Activated CD8-positive, alpha-beta T cell treated with anti-CD3 and anti-CD28 coated beads, Interleukin-2, amount 10 ng/mL, durations not matched to agents 7 days and 5 days (primary cell): ENCODE measurements at regions of chr15 and their contacts with region 1.

Region 1: GRCh38 chr15:51776952-51777574 is 25.7 kb downstream of the TMOD2 start:
- DNase-seq: peak; percentile 80
- ATAC-seq: peak; percentile 73
- H3K4me3 Mint-ChIP-seq: no peak overlapping the region
- H3K27ac Mint-ChIP-seq: no peak overlapping the region
- H3K4me1 Mint-ChIP-seq: peaks cover 9% of the 10 kb centered on the region
- H3K27me3 Mint-ChIP-seq: no peaks in the 10 kb centered on the region

Region 2: DNA sequence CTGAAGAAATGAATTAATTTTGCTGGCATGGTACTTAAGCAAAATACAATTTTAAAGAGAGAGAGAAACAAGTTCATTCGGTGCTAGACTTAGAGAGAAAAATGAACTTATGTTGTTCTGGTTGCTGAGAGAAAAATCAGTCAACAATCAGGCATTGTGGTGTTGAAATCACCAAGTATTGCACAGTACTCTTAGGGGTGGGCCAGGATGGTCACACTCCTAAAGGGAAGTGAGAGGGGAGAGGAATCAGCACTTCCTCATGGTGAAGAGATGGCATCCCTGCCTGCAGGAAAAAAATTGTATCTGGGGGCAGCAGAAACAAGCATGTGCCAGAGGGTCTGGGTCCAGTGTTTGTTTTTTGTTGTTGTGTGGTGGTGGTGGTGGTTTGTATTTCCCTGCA is 147.5 kb before region 1 on chr15:
- CTCF ChIA-PET with region 1: interaction called, 27 read pairs
- POLR2A ChIA-PET with region 1: no interaction called
- DNase-seq: no peak
- ATAC-seq: no peak
- H3K4me3 Mint-ChIP-seq: no peak overlapping the region
- H3K27ac Mint-ChIP-seq: no peak overlapping the region
- H3K4me1 Mint-ChIP-seq: peaks cover 4% of the 10 kb centered on the region
- H3K27me3 Mint-ChIP-seq: peaks cover 24% of the 10 kb centered on the region

Region 3: DNA sequence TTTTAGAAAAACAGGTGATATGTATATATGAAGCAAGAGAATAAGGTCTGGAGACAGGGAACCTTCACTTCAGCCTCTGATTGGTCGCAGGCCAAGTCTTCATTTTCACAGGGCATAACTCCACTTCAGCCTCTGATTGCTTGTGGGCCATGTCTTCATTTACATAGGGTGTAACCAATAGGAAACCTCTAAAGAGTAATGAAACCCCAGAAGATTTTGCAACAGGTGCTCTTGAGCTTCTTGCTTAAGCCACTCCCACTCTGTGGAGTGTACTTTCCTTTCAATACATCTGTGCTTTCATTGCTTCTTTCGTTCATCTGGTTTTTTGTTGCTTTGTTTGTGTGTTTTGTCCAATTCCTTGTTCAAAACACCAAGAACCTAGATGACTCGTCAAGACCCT is 118.4 kb before region 1 on chr15:
- CTCF ChIA-PET with region 1: interaction called, 29 read pairs
- POLR2A ChIA-PET with region 1: no interaction called
- DNase-seq: no peak
- ATAC-seq: no peak
- H3K4me3 Mint-ChIP-seq: no peak overlapping the region
- H3K27ac Mint-ChIP-seq: no peak overlapping the region
- H3K4me1 Mint-ChIP-seq: no peaks in the 10 kb centered on the region
- H3K27me3 Mint-ChIP-seq: peaks cover 6% of the 10 kb centered on the region

Region 4: DNA sequence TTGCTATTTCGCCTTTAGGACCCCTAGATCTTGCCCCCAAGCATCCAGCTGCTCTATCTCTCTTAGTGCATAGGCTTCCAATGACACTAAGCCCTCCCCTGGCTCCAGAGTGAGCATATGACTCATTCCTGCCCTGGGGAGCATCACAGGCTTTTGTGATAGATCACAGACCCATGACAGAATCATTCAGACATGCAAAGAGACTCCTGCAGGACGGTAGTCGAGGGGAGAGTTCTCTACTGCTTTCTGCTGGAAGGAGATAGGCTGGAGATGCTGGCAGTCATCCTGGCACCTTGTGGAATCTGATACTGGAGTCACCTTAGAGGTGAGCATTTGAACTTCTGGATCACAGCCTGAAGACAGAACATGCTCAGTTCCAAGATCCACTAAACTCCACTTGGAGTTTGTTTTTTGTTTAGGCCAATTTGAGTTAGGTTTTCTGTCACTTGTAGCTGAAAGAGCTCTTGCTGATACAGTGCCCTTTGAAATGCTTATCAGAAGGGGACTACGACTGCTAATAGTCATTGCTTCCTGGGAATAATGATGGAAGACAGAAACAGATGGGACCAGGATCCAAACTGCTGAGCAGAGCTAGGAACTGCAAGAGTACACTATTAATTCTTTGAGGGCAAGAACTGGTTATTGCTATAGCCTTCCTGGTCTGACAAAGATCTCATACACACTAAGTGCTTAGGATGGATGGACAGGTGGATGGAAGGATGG is 50.6 kb before region 1 on chr15:
- CTCF ChIA-PET with region 1: interaction called, 155 read pairs
- POLR2A ChIA-PET with region 1: no interaction called
- DNase-seq: peak; percentile 30
- ATAC-seq: peak; percentile 65
- H3K4me3 Mint-ChIP-seq: no peak overlapping the region
- H3K27ac Mint-ChIP-seq: no peak overlapping the region
- H3K4me1 Mint-ChIP-seq: peaks cover 46% of the 10 kb centered on the region
- H3K27me3 Mint-ChIP-seq: no peaks in the 10 kb centered on the region

Region 5: DNA sequence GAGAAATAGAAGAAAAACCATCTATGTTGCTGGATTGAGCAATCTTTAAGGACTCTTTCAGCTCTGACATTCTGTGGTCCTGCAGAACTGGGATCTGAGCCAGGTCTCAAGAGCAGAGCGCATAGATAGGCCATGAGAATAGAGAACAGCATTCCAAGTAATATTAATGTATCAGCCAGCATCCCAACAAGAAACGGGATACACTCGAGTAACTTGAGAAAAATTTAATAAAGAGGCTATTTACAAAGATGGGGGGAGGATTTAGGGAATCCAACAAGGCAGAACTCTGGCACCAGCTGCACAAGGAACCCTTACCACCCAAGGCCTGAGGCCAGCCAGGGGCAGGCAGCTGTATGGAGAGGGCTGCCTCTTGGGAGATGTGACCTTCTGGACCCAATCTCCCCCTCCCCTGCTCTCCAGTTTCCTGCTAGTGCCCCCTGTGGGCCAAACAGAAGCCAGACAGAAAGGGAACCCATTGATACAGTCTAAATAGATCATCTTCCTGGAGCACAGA is 17.4 kb before region 1 on chr15:
- CTCF ChIA-PET with region 1: interaction called, 56 read pairs
- POLR2A ChIA-PET with region 1: no interaction called
- DNase-seq: no peak
- ATAC-seq: no peak
- H3K4me3 Mint-ChIP-seq: no peak overlapping the region
- H3K27ac Mint-ChIP-seq: no peak overlapping the region
- H3K4me1 Mint-ChIP-seq: peaks cover 17% of the 10 kb centered on the region
- H3K27me3 Mint-ChIP-seq: no peaks in the 10 kb centered on the region